ENCODE measurements at regions of chrX and their contacts with region 1.

Region 1: DNA sequence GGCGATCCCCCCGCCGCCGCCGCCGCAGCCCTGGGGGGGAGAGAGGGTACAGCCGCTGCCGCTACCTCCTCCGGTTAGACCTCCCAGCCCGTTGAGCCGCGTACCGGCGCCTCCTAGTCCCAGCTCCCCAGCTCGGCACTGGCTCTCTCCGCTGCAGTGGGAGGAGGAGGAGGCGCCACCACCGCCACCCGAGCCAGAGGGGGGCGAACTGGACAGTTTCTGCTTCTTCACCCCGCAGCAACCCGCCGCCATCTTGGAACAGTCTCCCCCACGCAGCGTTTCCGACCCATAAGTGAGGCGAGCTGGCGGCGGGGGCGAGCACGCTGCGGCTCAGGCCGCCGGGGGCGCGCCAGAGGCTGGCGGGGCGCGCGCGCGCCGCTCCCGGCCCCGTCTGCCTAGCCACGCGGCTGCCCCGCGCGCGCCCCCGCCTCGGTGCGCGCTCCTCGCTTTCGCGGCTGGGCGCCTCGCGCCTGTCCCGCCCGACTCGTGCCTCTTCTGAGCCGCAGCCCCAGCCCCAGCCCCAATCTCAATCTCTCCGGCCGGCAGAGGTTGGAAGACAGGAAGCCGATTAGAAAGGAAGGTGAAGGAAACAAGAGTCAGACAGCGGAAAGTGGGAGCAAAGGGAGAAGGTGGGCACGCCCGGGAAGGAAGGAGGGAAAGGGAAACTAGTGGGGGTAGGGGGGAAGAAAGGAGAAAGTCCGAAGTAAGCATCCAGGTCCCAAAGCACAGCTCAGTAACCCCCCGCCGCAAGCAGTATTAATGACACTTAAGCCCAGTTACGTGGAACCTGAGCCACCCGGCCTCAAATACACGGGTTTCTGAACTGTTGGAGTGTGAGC is at the start of gene AMMECR1:
- DNase-seq: peak; percentile 79 to 93 (median 92)
- ATAC-seq: peak; percentile 98 to 99
- H3K4me3 ChIP-seq: peak within 1 kb of the TSS; percentile 92
- H3K27ac ChIP-seq: peak within 1 kb of the TSS; percentile 89
- H3K4me1 ChIP-seq: peaks cover 3% of the 10 kb centered on the region
- H3K27me3 ChIP-seq: no peaks in the 10 kb centered on the region
- total RNA-seq, gene AMMECR1: 1.2 to 3.1 (median 1.8) TPM

Region 2: GRCh38 chrX:110192516-110192915 is 125.5 kb before region 1 on chrX:
- intact Hi-C with region 1: loop called in 1 of 4 experiments (anchors 10 kb)
- DNase-seq: no peak
- ATAC-seq: no peak
- H3K4me3 ChIP-seq: no peak overlapping the region
- H3K27ac ChIP-seq: no peak overlapping the region
- H3K4me1 ChIP-seq: no peaks in the 10 kb centered on the region
- H3K27me3 ChIP-seq: no peaks in the 10 kb centered on the region

Region 3: GRCh38 chrX:110226931-110227330 is 91.1 kb before region 1 on chrX:
- intact Hi-C with region 1: no loop called
- DNase-seq: no peak
- ATAC-seq: no peak
- H3K4me3 ChIP-seq: no peak overlapping the region
- H3K27ac ChIP-seq: no peak overlapping the region
- H3K4me1 ChIP-seq: no peaks in the 10 kb centered on the region
- H3K27me3 ChIP-seq: no peaks in the 10 kb centered on the region

Measured in right cardiac atrium (tissue), 5 donors.